B cell (primary cell): ENCODE measurements at regions of chr6 and their contacts with region 1.

Region 1: GRCh38 chr6:31403283-31403989 is at the start of gene MICA:
- DNase-seq: peak; percentile 75
- ATAC-seq: peak; percentile 64
- H3K4me3 ChIP-seq: peak within 1 kb of the TSS; percentile 12 to 72 (median 64)
- H3K4me3 Mint-ChIP-seq: peak within 1 kb of the TSS; percentile 90
- H3K27ac ChIP-seq: peak within 1 kb of the TSS; percentile 12 to 82
- H3K27ac Mint-ChIP-seq: peak within 1 kb of the TSS; percentile 75
- H3K4me1 ChIP-seq: peaks cover 30 to 44% of the 10 kb centered on the region in 2 donors
- H3K4me1 Mint-ChIP-seq: peaks cover 64% of the 10 kb centered on the region
- H3K27me3 ChIP-seq: no peaks in the 10 kb centered on the region
- H3K27me3 Mint-ChIP-seq: no peaks in the 10 kb centered on the region
- CTCF ChIP-seq: no peak
- total RNA-seq, gene MICA: 13.9 and 17.1 TPM in 2 replicates

Region 2: DNA sequence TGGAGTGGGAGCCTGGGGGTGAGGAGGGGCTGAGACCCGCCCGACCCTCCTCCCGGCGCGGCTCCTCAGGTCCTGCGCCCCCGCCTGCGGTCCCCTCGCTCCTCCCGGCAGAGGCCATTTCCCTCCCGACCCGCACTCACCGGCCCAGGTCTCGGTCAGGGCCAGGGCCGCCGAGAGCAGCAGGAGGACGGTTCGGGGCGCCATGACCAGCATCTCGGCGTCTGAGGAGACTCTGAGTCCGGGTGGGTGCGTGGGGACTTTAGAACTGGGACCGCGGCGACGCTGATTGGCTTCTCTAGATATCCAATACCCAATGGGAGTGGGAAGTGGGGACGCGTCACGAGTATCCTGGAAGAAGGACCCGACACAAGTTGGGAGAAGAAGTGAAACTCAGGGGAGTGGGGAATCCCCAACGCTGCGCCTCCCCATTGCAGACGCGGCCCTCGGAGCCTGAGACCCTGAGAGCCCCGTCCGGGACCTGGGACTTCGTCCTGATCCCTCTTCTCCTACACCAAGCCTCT is 46.4 kb before region 1 on chr6 and contains the start of gene HLA-B:
- CTCF ChIA-PET with region 1: no interaction called
- POLR2A ChIA-PET with region 1: no interaction called
- intact Hi-C with region 1: loop called (anchors 5 kb)
- DNase-seq: peak; percentile 96
- ATAC-seq: peak; percentile 88
- H3K4me3 ChIP-seq: peak within 1 kb of the TSS; percentile 51 to 98 (median 87)
- H3K4me3 Mint-ChIP-seq: peak within 1 kb of the TSS; percentile 99
- H3K27ac ChIP-seq: peak within 1 kb of the TSS; percentile 98 to 100
- H3K27ac Mint-ChIP-seq: peak within 1 kb of the TSS; percentile 100
- H3K4me1 ChIP-seq: peaks cover 43 to 44% of the 10 kb centered on the region in 2 donors
- H3K4me1 Mint-ChIP-seq: peaks cover 55% of the 10 kb centered on the region
- H3K27me3 ChIP-seq: no peaks in the 10 kb centered on the region
- H3K27me3 Mint-ChIP-seq: peaks cover 3% of the 10 kb centered on the region
- CTCF ChIP-seq: no peak
- total RNA-seq, gene HLA-B: 3,910 and 4,028 TPM in 2 replicates

Region 3: GRCh38 chr6:31426395-31427354 is 23.2 kb after region 1 on chr6:
- CTCF ChIA-PET with region 1: interaction called, 13 read pairs
- POLR2A ChIA-PET with region 1: interaction called, 3 read pairs
- intact Hi-C with region 1: loop called (anchors 2 kb)
- DNase-seq: peak; percentile 30
- ATAC-seq: peak; percentile 31
- H3K4me3 ChIP-seq: no peak overlapping the region
- H3K4me3 Mint-ChIP-seq: no peak overlapping the region
- H3K27ac ChIP-seq: no peak overlapping the region
- H3K27ac Mint-ChIP-seq: peak overlapping the region; percentile 13
- H3K4me1 ChIP-seq: peaks cover 18% of the 10 kb centered on the region in 2 donors
- H3K4me1 Mint-ChIP-seq: peaks cover 26% of the 10 kb centered on the region
- H3K27me3 ChIP-seq: no peaks in the 10 kb centered on the region
- H3K27me3 Mint-ChIP-seq: no peaks in the 10 kb centered on the region
- CTCF ChIP-seq: no peak

Region 4: DNA sequence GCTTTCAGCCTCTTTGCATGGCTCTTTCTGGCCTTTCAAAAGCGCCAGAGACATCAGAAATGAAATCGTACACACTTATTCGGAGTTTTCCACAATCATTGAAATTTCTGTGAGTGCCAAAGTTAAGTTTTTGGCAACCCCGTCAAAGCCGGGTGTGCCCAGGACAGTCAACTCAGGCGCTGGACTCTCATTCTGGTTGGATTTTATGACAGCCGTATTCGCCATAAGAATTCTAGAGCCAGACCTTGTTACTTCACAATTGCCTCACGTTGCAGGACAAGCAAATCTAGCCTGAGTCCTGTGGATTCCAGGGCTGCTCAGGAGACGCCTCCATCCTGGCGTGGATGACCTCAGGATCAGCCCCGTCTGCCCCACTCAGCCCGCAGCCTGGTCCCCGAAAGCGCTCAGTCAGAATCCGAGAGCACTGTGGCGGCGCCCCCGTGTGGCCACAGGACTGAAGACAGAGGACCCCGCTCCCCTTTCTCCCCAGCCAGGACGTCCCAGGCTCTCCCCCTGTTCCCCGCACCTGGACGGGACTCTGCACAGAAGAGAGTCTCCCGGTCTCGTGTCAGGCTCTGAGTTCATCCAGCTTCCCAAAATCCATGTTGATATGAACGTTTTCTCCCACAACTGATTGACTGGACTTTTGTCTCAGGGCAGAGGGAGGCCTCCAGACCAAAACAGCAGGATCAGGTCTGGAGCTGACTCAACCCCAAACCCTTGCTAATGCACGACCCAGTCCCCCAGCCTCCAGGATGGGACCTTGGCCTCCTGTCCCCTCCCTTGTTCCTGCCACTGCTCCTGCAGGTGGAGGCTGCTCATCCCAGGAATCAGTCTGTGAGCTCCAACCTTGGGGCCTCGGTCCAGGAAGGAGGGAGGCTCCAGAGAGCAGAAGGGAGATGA is 38.2 kb after region 1 on chr6:
- CTCF ChIA-PET with region 1: interaction called, 78 read pairs
- POLR2A ChIA-PET with region 1: interaction called, 6 read pairs
- intact Hi-C with region 1: no loop called
- DNase-seq: peak; percentile 81
- ATAC-seq: peak; percentile 95
- H3K4me3 ChIP-seq: no peak overlapping the region
- H3K4me3 Mint-ChIP-seq: no peak overlapping the region
- H3K27ac ChIP-seq: no peak overlapping the region
- H3K27ac Mint-ChIP-seq: peak overlapping the region; percentile 20
- H3K4me1 ChIP-seq: peaks cover 3 to 4% of the 10 kb centered on the region in 2 donors
- H3K4me1 Mint-ChIP-seq: peaks cover 17% of the 10 kb centered on the region
- H3K27me3 ChIP-seq: peaks cover 0 to 18% (median 16%) of the 10 kb centered on the region in 4 experiments
- H3K27me3 Mint-ChIP-seq: peaks cover 47% of the 10 kb centered on the region
- CTCF ChIP-seq: peak; percentile 87

Region 5: DNA sequence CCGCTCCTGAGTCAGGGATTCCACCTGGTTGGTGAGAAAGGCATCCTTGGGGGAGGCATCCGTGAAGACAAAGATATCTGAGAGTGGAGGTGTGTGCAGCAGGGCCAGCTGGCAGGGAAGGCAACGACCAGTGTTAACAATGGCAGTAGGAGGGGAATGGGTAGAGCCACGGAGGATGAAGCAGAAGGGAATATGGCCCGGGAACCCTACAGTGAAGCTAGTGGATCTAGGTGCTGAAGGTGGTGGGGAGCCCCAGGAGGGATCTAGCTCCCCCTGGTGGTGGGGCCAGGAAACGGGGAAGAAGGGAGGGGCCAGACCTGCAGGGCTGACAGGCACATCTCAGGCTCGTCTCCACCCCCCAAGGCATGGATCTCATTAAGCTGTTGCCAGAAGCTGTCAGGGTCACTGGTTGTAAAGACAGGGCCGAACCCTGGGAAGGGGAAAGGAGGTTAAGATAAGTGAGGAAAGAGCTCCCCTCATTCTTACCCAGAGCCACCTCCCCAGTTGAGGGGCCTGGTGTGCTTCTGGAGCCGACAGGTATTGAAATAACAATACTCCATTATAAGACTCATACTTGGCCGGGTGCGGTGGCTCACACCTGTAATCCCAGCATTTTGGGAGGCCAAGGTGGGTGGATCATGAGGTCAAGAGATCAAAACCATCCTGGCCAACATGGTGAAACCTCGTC is 366.4 kb after region 1 on chr6:
- CTCF ChIA-PET with region 1: no interaction called
- POLR2A ChIA-PET with region 1: no interaction called
- intact Hi-C with region 1: no loop called
- DNase-seq: peak; percentile 87
- ATAC-seq: peak; percentile 98
- H3K4me3 ChIP-seq: no peak overlapping the region
- H3K4me3 Mint-ChIP-seq: no peak overlapping the region
- H3K27ac ChIP-seq: no peak overlapping the region
- H3K27ac Mint-ChIP-seq: peak overlapping the region; percentile 32
- H3K4me1 ChIP-seq: peaks cover 0 to 9% of the 10 kb centered on the region in 2 donors
- H3K4me1 Mint-ChIP-seq: peaks cover 13% of the 10 kb centered on the region
- H3K27me3 ChIP-seq: no peaks in the 10 kb centered on the region
- H3K27me3 Mint-ChIP-seq: no peaks in the 10 kb centered on the region
- CTCF ChIP-seq: peak; percentile 74